ENCODE measurements at regions of chr5 and their contacts with region 1.

Region 1: GRCh38 chr5:35926389-35927051 is 11.9 kb downstream of the CAPSL start:
- DNase-seq: peak; percentile 37
- H3K4me3 ChIP-seq: no peak overlapping the region
- H3K27ac ChIP-seq: no peak overlapping the region
- H3K4me1 ChIP-seq: peaks cover 23% of the 10 kb centered on the region
- H3K27me3 ChIP-seq: no peaks in the 10 kb centered on the region
- CTCF ChIP-seq: peak; percentile 80 to 81

Region 2: DNA sequence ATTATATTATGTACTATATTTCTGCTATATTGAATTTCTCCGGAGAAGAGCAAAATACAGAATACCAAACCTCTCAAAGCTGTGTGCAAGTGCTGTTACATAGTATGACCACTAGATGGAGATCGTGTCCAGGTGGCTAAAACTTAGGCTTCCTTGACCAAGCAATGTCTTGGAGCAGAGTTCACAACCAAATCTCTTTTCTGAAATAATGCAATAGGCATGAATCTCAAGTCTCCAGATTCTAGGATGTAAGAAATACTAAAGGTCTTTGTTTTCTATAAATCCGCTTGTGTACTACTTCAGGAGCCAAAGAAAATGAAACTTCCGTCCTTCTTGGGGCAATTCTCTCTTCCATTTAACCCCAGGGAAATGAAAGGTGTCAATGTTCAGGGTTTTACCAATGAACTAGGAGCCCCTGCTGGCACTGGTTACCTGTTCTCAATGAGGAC is 1451.9 kb before region 1 on chr5:
- CTCF ChIA-PET with region 1: no interaction called
- dilution Hi-C with region 1: no loop called
- in situ Hi-C with region 1: no loop called
- intact Hi-C with region 1: loop called (anchors 5 kb)
- DNase-seq: peak; percentile 43
- H3K4me3 ChIP-seq: no peak overlapping the region
- H3K27ac ChIP-seq: no peak overlapping the region
- H3K4me1 ChIP-seq: no peaks in the 10 kb centered on the region
- H3K27me3 ChIP-seq: no peaks in the 10 kb centered on the region
- CTCF ChIP-seq: peak; percentile 96 to 98

Region 3: DNA sequence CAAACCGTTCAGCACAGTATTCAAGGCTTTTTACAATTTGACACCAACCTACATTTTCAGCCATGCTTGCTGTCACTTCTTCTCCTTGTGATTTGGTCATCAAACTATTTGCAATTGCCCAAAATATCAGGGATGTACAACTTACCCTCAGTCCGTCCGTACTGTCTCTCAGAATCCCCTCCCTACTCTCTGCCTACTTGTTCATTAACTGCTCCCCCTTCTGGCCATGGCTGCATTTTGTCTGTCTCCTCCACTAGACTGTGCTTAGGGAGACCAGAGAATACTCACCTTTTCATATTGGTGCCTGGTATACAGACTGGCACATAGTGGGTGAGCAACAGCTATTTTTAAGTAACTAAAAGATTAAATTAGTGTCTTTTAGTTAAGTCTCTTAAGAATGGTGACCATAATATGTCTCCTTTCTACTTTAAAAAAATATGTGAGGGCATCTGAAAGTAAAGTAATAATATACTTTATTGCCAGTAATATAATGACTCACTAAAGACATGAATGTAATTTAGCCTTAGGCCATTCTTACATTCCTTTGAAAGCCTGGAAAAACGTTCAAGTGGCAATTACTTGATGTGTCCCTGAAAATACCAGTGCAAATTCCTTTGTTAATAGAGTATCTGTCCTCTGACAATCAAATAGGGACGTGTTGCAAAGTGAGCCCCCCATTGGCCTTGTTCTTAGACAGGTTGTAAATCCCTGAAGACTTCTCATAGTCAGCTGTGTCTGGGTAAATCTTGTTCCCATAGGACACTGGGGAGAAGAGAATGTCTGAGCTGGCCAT is 724.0 kb before region 1 on chr5:
- CTCF ChIA-PET with region 1: no interaction called
- dilution Hi-C with region 1: no loop called
- in situ Hi-C with region 1: no loop called
- intact Hi-C with region 1: no loop called
- DNase-seq: no peak
- H3K4me3 ChIP-seq: no peak overlapping the region
- H3K27ac ChIP-seq: no peak overlapping the region
- H3K4me1 ChIP-seq: no peaks in the 10 kb centered on the region
- H3K27me3 ChIP-seq: no peaks in the 10 kb centered on the region
- CTCF ChIP-seq: peak; percentile 26 to 32

Region 4: GRCh38 chr5:35229076-35230037 is 697.2 kb before region 1 on chr5:
- CTCF ChIA-PET with region 1: no interaction called
- dilution Hi-C with region 1: no loop called
- in situ Hi-C with region 1: no loop called
- intact Hi-C with region 1: loop called (anchors 10 kb)
- DNase-seq: peak; percentile 9
- H3K4me3 ChIP-seq: no peak overlapping the region
- H3K27ac ChIP-seq: no peak overlapping the region
- H3K4me1 ChIP-seq: no peaks in the 10 kb centered on the region
- H3K27me3 ChIP-seq: peaks cover 15% of the 10 kb centered on the region
- CTCF ChIP-seq: peak in 1 of 2 donors; percentile 15

Region 5: DNA sequence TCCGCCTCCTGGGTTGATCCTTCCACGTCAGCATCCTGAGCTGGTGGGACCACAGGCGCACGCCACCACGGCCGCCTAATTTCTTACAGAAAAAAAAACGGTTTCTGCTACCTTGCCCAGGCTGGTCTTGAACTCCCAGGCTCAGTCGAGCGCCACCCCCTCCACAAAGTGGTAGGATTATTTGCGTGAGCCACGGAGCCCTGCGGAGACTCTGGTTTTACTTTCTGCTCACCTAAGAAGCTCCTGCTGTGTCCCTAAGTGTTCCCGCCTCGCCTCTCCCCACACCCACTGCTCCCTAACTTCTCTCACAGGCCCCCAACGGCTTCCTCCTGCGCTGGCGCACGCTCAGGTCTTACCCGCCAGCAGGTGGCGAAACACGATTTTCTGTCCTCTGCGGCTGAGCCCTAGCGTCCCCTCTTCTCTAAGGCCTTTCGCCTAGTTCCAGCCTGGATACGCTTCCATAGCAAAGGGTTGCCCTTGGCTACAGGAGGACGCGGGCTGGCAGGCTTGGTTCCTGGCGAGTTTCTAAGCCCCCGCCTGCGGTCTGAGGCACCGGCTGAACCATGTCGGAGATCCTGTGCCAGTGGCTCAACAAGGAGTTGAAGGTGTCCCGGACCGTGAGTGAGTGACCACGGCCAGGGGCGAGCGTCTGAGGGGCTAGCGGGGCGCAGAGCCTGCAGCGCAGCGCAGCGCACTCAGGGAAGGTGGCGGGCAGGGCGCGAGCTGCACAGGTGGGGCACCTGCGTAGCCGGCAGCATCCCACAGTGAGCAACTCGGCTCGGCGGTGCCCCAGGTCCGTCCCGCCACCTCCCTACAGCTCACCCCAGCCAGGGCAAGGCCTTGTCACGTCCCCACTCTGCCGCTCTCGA is 308.9 kb before region 1 on chr5 and contains the start of gene SPEF2:
- CTCF ChIA-PET with region 1: no interaction called
- dilution Hi-C with region 1: no loop called
- in situ Hi-C with region 1: no loop called
- intact Hi-C with region 1: loop called (anchors 1 kb)
- DNase-seq: peak; percentile 81
- H3K4me3 ChIP-seq: peak within 1 kb of the TSS; percentile 61 to 79 (median 75)
- H3K27ac ChIP-seq: peak within 1 kb of the TSS; percentile 4
- H3K4me1 ChIP-seq: no peaks in the 10 kb centered on the region
- H3K27me3 ChIP-seq: no peaks in the 10 kb centered on the region
- CTCF ChIP-seq: peak; percentile 76 to 81
- total RNA-seq, gene SPEF2: 1.6 to 3.5 TPM

Region 6: GRCh38 chr5:35777358-35778087 is 149.0 kb before region 1 on chr5:
- CTCF ChIA-PET with region 1: interaction called, 3 read pairs
- dilution Hi-C with region 1: no loop called
- in situ Hi-C with region 1: loop called (anchors 5 kb)
- intact Hi-C with region 1: loop called (anchors 1 kb)
- DNase-seq: peak; percentile 54
- H3K4me3 ChIP-seq: no peak overlapping the region
- H3K27ac ChIP-seq: no peak overlapping the region
- H3K4me1 ChIP-seq: no peaks in the 10 kb centered on the region
- H3K27me3 ChIP-seq: no peaks in the 10 kb centered on the region
- CTCF ChIP-seq: peak; percentile 44 to 68

Region 7: DNA sequence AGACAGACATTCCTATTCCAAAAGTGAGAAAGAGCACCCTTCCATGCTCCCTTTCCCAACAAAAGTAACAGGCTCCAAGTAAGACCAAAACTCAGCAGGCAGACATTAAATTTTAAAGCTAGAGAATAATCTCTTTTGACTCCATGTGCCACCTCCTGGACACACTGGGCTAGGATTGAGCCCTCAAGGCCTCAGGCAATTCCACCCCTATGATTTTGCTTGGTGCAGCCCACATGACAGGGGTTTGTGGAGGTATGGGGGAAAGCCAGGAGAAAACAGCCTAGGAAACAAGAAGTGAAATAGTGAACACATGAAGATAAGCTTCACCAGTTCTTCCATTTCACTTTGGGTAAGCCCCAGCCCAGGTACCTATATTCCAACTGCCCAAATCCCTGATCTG is 16.6 kb after region 1 on chr5:
- CTCF ChIA-PET with region 1: no interaction called
- dilution Hi-C with region 1: no loop called
- in situ Hi-C with region 1: no loop called
- intact Hi-C with region 1: no loop called
- DNase-seq: no peak
- H3K4me3 ChIP-seq: no peak overlapping the region
- H3K27ac ChIP-seq: no peak overlapping the region
- H3K4me1 ChIP-seq: no peaks in the 10 kb centered on the region
- H3K27me3 ChIP-seq: peaks cover 1% of the 10 kb centered on the region
- CTCF ChIP-seq: no peak

Region 8: DNA sequence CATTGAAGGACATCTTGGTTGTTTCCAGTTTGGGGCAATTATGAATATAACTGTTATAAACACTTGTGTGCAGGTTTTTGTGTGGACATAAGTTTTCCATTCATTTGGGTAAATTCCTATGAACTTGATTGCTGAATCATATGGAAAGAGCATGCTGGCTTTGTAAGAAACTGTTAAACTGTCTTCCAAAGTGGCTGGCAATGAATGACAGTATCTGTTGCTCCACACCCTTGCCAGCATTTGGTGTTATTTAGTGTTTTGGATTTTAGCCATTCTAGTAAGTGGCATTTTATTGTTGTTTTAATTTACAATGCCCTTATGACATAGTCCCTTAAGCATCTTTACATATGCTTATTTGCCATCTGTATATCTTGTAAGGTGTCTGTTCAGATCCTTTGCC is 170.0 kb after region 1 on chr5:
- CTCF ChIA-PET with region 1: no interaction called
- dilution Hi-C with region 1: no loop called
- in situ Hi-C with region 1: no loop called
- intact Hi-C with region 1: no loop called
- DNase-seq: no peak
- H3K4me3 ChIP-seq: no peak overlapping the region
- H3K27ac ChIP-seq: no peak overlapping the region
- H3K4me1 ChIP-seq: no peaks in the 10 kb centered on the region
- H3K27me3 ChIP-seq: no peaks in the 10 kb centered on the region
- CTCF ChIP-seq: no peak

Region 9: DNA sequence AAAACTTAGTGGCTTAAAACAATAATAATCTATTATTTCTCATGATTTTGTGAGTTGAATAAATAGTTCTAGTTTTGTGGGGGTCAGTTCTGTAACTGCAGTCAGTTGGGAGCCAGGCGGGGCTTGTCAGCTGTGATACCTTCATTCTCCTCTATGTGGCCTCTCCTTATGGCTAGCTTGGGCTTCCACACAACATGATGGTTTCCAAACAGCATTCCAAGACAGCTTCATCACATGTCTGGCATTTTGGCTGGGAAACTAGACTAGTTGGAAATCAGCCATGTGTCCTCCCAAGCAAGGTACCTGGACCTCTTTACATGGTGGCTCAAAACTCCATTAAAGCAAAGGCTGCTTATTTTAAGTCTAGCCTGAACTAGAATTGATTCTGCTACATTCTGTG is 436.6 kb after region 1 on chr5:
- CTCF ChIA-PET with region 1: no interaction called
- dilution Hi-C with region 1: no loop called
- in situ Hi-C with region 1: no loop called
- intact Hi-C with region 1: no loop called
- DNase-seq: peak; percentile 44
- H3K4me3 ChIP-seq: no peak overlapping the region
- H3K27ac ChIP-seq: no peak overlapping the region
- H3K4me1 ChIP-seq: peaks cover 10% of the 10 kb centered on the region
- H3K27me3 ChIP-seq: no peaks in the 10 kb centered on the region
- CTCF ChIP-seq: peak; percentile 38 to 43